ENCODE measurements at regions of chr2 and their contacts with region 1.

Region 1: DNA sequence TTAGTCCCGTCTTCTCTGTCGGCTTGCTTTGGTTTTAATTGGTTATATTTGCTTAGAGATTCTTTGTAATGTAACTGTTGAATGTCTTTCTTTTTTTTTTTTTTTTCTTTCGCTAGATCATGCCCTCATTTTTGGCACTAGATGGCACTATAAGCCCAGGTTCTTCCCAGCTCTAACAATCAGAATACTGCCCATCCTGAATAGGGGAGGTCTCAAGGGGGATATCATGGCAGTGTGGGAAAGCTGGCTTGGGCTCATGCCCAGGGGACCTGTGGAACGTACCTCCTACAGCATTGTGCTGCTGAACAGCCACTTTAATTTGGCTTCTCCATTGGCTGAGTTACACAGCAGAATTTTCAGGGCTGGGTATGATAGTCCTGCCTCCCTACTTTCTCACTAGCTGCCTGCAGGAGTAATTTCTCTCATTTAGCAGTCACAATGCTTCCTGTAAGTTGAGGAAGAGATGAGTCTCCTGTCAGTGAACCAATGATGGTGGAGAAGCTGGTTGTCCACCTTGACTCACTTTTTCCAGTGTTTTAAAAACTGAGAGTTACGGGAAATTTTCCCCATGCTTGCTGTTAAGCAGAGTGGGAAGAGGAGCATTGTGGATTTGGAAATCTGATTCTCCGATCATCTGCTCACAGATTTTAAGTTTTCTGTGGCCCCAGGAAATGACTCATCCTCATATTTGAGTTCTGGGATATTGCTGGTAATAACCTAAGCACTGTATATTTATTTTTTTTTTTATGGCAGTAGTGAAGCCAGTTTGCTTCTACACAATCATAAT is 47.2 kb downstream of the RAD51AP2 start:
- DNase-seq: peak; percentile 44
- ATAC-seq: peak; percentile 83
- H3K4me3 ChIP-seq: no peak overlapping the region
- H3K27ac ChIP-seq: no peak overlapping the region
- H3K4me1 ChIP-seq: no peaks in the 10 kb centered on the region
- H3K27me3 ChIP-seq: no peaks in the 10 kb centered on the region
- CTCF ChIP-seq: peak; percentile 64 to 88 (median 82)
- POLR2A ChIP-seq: no peak
- RAD21 ChIP-seq: peak; percentile 88

Region 2: GRCh38 chr2:17573085-17573803 is 102.2 kb after region 1 on chr2:
- CTCF ChIA-PET with region 1: no interaction called
- POLR2A ChIA-PET with region 1: no interaction called
- RAD21 ChIA-PET with region 1: no interaction called
- intact Hi-C with region 1: loop called (anchors 2 kb)
- DNase-seq: no peak
- ATAC-seq: peak; percentile 63
- H3K4me3 ChIP-seq: no peak overlapping the region
- H3K27ac ChIP-seq: no peak overlapping the region
- H3K4me1 ChIP-seq: peaks cover 0 to 17% of the 10 kb centered on the region in 2 experiments; a peak in 3 of 4 replicates
- H3K27me3 ChIP-seq: no peaks in the 10 kb centered on the region
- CTCF ChIP-seq: peak; percentile 12 to 46 (median 44); a peak in 3 of 6 replicates
- POLR2A ChIP-seq: no peak
- RAD21 ChIP-seq: peak; percentile 72

Region 3: GRCh38 chr2:17830053-17831034 is 359.3 kb after region 1 on chr2:
- CTCF ChIA-PET with region 1: no interaction called
- POLR2A ChIA-PET with region 1: no interaction called
- RAD21 ChIA-PET with region 1: no interaction called
- intact Hi-C with region 1: loop called (anchors 5 kb)
- DNase-seq: peak; percentile 82
- ATAC-seq: peak; percentile 100
- H3K4me3 ChIP-seq: peak overlapping the region in 1 of 2 experiments; percentile 40; a peak in 3 of 4 replicates
- H3K27ac ChIP-seq: no peak overlapping the region
- H3K4me1 ChIP-seq: peaks cover 0 to 10% of the 10 kb centered on the region in 2 experiments; a peak in 1 of 4 replicates
- H3K27me3 ChIP-seq: no peaks in the 10 kb centered on the region
- CTCF ChIP-seq: peak; percentile 94 to 98 (median 97)
- POLR2A ChIP-seq: no peak
- RAD21 ChIP-seq: peak; percentile 74

Region 4: DNA sequence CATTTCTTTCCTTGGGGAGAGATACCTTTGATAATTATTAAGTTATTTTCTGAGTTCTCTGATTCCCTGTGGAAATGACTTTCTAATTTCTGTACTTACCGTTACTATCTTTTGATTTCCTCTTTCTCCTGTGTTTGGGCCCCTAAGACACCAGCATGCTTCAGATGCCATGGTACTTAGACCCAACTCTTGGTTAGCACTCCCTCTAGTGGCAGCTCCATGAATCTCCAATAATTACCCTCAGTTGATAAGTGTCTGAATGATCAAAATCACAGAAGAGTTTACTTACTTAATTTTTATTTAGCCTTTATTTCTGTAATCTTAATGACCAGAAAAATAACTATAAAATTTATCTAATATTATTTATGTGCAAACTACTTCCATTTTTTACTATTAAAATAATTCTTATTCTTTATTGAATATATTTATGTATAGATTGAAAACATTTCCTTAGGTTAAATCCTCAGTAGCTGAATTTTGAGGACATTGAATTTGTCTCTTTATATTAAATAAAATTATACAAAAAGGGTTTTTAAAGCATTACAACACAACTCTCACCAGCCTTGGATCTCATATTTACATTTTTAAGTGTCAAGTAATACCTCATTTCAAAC is 707.8 kb after region 1 on chr2:
- CTCF ChIA-PET with region 1: no interaction called
- POLR2A ChIA-PET with region 1: no interaction called
- RAD21 ChIA-PET with region 1: no interaction called
- intact Hi-C with region 1: loop called (anchors 10 kb)
- DNase-seq: peak; percentile 40
- ATAC-seq: peak; percentile 90
- H3K4me3 ChIP-seq: no peak overlapping the region
- H3K27ac ChIP-seq: no peak overlapping the region
- H3K4me1 ChIP-seq: no peaks in the 10 kb centered on the region
- H3K27me3 ChIP-seq: peaks cover 10% of the 10 kb centered on the region
- CTCF ChIP-seq: peak; percentile 53 to 78 (median 76); a peak in 5 of 6 replicates
- POLR2A ChIP-seq: no peak
- RAD21 ChIP-seq: peak; percentile 66

Region 5: DNA sequence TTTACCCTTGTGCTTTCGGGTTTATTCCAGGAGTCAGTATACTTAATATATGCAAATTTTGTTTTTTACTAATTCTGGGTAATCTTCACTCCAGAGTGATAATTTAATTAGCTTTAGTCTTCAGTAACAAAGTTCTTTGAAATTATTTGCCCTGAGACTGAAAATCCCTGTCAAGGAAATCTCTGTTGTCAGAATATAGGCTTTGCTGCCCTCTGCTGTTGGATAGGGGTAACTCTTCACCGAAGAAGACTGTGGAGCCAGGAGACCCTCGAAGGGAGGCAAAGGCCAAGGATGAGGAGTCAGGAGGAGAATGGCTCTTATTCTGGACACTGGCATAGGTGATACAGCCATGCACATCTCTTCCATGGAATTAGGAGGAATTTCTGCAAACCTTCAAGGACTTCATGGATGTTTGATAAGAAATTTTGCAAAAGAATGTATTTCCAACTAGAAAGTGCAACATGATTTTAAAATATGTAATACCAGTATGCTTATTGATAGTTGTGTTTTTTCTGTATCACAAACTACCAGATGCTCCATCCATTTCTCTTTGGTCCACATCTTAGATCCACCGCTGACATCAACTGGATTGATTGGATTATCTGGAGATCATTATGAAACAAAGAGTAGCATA is 907.1 kb after region 1 on chr2:
- CTCF ChIA-PET with region 1: no interaction called
- POLR2A ChIA-PET with region 1: no interaction called
- RAD21 ChIA-PET with region 1: no interaction called
- intact Hi-C with region 1: loop called (anchors 2 kb)
- DNase-seq: peak; percentile 19
- ATAC-seq: peak; percentile 84
- H3K4me3 ChIP-seq: no peak overlapping the region
- H3K27ac ChIP-seq: no peak overlapping the region
- H3K4me1 ChIP-seq: no peaks in the 10 kb centered on the region
- H3K27me3 ChIP-seq: peaks cover 29% of the 10 kb centered on the region
- CTCF ChIP-seq: peak; percentile 63 to 84 (median 74); a peak in 5 of 6 replicates
- POLR2A ChIP-seq: no peak
- RAD21 ChIP-seq: peak; percentile 76

Measured in HCT116 (cell line).